WTC11 (cell line): ENCODE measurements at regions of chr17 and their contacts with region 1.

Region 1: GRCh38 chr17:32877164-32877764 is 340 bp upstream of the MYO1D start:
- DNase-seq: peak; percentile 91
- ATAC-seq: peak; percentile 95
- H3K4me3 Mint-ChIP-seq: peak overlapping the region; percentile 61
- H3K27ac Mint-ChIP-seq: peak overlapping the region; percentile 67; the same call in 1 of the 2 replicates
- H3K4me1 Mint-ChIP-seq: peaks cover 20% of the 10 kb centered on the region
- H3K27me3 Mint-ChIP-seq: peaks cover 2% of the 10 kb centered on the region; the same call in 1 of the 2 replicates
- CTCF ChIP-seq: peak; percentile 86

Region 2: DNA sequence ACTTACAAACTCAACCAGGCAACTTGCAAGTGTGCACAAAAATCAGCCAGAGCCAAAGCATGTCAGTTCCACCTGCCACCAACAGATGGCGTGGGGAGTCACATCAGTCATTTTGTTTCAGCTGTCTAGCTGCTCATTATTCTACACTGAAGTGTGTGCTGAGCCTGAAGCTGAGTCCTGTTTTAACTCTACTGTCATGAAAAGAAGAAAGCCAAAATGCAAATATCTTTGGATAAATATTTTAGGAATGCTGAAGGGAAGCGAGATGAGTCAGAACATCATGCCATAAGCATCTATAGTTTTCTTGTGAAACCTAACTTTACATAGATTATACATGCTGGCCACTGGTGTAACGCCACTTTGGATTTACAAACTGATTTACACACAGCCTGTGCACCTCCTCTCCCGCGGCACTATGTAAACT is 217.8 kb before region 1 on chr17:
- CTCF ChIA-PET with region 1: interaction called, 11 read pairs
- POLR2A ChIA-PET with region 1: no interaction called
- DNase-seq: peak; percentile 83
- ATAC-seq: peak; percentile 76
- H3K4me3 Mint-ChIP-seq: no peak overlapping the region
- H3K27ac Mint-ChIP-seq: no peak overlapping the region
- H3K4me1 Mint-ChIP-seq: peaks cover 2% of the 10 kb centered on the region; the same call in 1 of the 2 replicates
- H3K27me3 Mint-ChIP-seq: no peaks in the 10 kb centered on the region
- CTCF ChIP-seq: peak; percentile 91

Region 3: GRCh38 chr17:32713081-32713480 is 164.2 kb before region 1 on chr17:
- CTCF ChIA-PET with region 1: no interaction called
- POLR2A ChIA-PET with region 1: no interaction called
- DNase-seq: no peak
- ATAC-seq: no peak
- H3K4me3 Mint-ChIP-seq: no peak overlapping the region
- H3K27ac Mint-ChIP-seq: no peak overlapping the region
- H3K4me1 Mint-ChIP-seq: no peaks in the 10 kb centered on the region
- H3K27me3 Mint-ChIP-seq: no peaks in the 10 kb centered on the region
- CTCF ChIP-seq: no peak

Region 4: DNA sequence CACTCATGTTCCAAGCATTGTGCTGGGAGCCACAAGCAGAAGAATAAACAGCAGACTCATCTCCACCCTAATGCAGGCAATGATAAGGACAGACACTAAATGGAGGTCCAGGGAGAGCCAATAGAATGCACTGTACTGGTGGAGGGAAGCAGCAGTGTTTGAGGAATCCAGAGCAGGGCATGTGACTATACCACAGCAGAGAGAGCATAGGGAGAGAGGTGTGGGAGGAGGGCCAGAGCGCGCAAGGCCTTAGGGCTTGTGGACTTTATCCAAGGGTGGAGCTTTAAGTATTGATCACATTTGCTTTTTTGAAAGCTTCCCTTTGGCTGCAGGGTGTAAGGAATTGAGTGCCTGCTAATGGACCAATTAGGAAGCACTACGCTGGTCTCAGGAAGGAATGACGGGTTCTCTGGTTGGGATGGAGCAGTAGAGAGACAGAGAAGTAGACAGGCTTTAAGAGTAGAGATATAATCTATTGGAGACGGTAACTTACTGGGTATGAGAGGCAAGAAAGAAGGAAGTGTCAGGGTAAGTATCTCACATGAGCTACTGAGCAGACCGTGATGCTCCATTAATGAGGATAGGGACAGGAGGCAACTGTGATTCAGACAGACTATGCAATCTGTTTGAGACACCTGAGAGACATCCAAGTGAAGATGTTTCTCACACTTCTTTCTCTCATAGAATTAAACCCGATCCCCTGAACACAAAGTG is 82.6 kb before region 1 on chr17:
- CTCF ChIA-PET with region 1: interaction called, 34 read pairs
- POLR2A ChIA-PET with region 1: no interaction called
- DNase-seq: no peak
- ATAC-seq: peak; percentile 71
- H3K4me3 Mint-ChIP-seq: no peak overlapping the region
- H3K27ac Mint-ChIP-seq: no peak overlapping the region
- H3K4me1 Mint-ChIP-seq: peaks cover 18% of the 10 kb centered on the region
- H3K27me3 Mint-ChIP-seq: no peaks in the 10 kb centered on the region
- CTCF ChIP-seq: no peak

Region 5: GRCh38 chr17:32859857-32860525 is 17.3 kb before region 1 on chr17:
- CTCF ChIA-PET with region 1: interaction called, 55 read pairs
- POLR2A ChIA-PET with region 1: interaction called, 3 read pairs
- DNase-seq: no peak
- ATAC-seq: no peak
- H3K4me3 Mint-ChIP-seq: no peak overlapping the region
- H3K27ac Mint-ChIP-seq: no peak overlapping the region; the same call in 1 of the 2 replicates
- H3K4me1 Mint-ChIP-seq: peaks cover 15% of the 10 kb centered on the region; the same call in 1 of the 2 replicates
- H3K27me3 Mint-ChIP-seq: no peaks in the 10 kb centered on the region
- CTCF ChIP-seq: no peak

Region 6: GRCh38 chr17:32909787-32910369 is 32.6 kb after region 1 on chr17:
- CTCF ChIA-PET with region 1: interaction called, 53 read pairs
- POLR2A ChIA-PET with region 1: interaction called, 6 read pairs
- DNase-seq: peak; percentile 79
- ATAC-seq: peak; percentile 87
- H3K4me3 Mint-ChIP-seq: no peak overlapping the region
- H3K27ac Mint-ChIP-seq: no peak overlapping the region
- H3K4me1 Mint-ChIP-seq: peaks cover 18% of the 10 kb centered on the region
- H3K27me3 Mint-ChIP-seq: no peaks in the 10 kb centered on the region; the same call in 1 of the 2 replicates
- CTCF ChIP-seq: peak; percentile 67; the same call in 1 of the 2 replicates